Activated CD4-positive, alpha-beta memory T cell treated with anti-CD3 and anti-CD28 coated beads for 36 hours (primary cell): ENCODE measurements at regions of chr11 and their contacts with region 1.

Region 1: GRCh38 chr11:61054927-61055562 is 47.2 kb upstream of the CD5 start:
- DNase-seq: peak; percentile 88
- H3K4me3 Mint-ChIP-seq: peak overlapping the region; percentile 46
- H3K27ac Mint-ChIP-seq: peak overlapping the region; percentile 95
- H3K4me1 Mint-ChIP-seq: peaks cover 89% of the 10 kb centered on the region
- H3K27me3 Mint-ChIP-seq: no peaks in the 10 kb centered on the region

Region 2: GRCh38 chr11:60992842-60993409 is 62.1 kb before region 1 on chr11:
- CTCF ChIA-PET with region 1: interaction called, 3 read pairs
- POLR2A ChIA-PET with region 1: interaction called, 54 read pairs
- intact Hi-C with region 1: no loop called
- DNase-seq: peak; percentile 19
- H3K4me3 Mint-ChIP-seq: peak overlapping the region; percentile 68
- H3K27ac Mint-ChIP-seq: peak overlapping the region; percentile 97
- H3K4me1 Mint-ChIP-seq: peaks cover 81% of the 10 kb centered on the region
- H3K27me3 Mint-ChIP-seq: no peaks in the 10 kb centered on the region

Region 3: DNA sequence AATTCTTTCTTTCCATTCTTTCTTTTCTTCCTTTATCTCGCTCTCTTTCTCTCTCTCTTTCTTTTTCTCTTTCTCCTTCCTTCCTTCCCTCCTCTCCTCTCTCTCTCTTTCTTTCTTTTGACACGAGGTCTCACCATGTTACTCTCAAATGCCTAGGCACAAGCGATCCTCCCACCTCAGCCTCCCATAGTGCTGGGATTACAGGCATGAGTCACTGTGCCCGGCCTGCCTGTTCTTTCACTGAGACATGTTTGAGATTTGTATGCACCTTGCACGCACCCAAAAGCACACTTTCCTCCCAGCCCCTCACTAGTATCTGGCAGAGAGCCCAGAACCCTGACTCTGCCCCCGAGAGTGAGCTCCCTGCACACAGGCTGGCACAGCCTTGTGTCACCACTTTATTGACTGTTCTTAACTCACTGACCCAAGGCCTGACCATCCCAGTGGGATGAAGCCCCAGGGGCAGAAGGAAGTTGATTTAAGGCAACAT is 26.7 kb before region 1 on chr11:
- CTCF ChIA-PET with region 1: no interaction called
- POLR2A ChIA-PET with region 1: interaction called, 27 read pairs
- intact Hi-C with region 1: loop called (anchors 2 kb)
- DNase-seq: peak; percentile 88
- H3K4me3 Mint-ChIP-seq: peak overlapping the region; percentile 83
- H3K27ac Mint-ChIP-seq: peak overlapping the region; percentile 96
- H3K4me1 Mint-ChIP-seq: peaks cover 77% of the 10 kb centered on the region
- H3K27me3 Mint-ChIP-seq: no peaks in the 10 kb centered on the region

Region 4: DNA sequence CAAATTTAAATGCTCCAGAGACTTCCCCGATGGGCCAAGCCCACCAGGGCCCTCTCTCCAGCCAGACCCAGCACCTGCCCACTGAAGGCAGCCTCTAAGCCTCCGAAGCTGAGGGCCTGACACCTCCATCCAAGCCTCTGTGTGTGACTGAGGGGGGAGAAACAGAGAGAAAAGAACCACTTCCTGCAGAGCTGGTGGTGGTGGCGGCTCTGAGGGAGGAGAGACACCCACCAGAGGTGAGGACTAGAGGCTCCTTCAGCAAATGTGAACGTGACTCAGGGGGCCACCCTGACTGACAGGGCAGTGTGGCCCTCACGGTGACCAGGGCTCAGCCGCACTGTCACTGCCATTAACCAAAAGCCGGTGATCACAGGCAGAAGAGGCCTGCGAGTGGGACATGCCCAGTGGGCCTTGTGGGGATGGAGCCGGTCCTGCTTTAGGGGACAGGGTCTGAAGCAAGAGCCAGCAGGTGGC is 16.2 kb after region 1 on chr11:
- CTCF ChIA-PET with region 1: no interaction called
- POLR2A ChIA-PET with region 1: interaction called, 55 read pairs
- intact Hi-C with region 1: no loop called
- DNase-seq: peak; percentile 80
- H3K4me3 Mint-ChIP-seq: peak overlapping the region; percentile 62
- H3K27ac Mint-ChIP-seq: peak overlapping the region; percentile 94
- H3K4me1 Mint-ChIP-seq: peaks cover 89% of the 10 kb centered on the region
- H3K27me3 Mint-ChIP-seq: no peaks in the 10 kb centered on the region

Region 5: GRCh38 chr11:61077936-61078335 is 22.9 kb after region 1 on chr11:
- CTCF ChIA-PET with region 1: interaction called, 3 read pairs
- POLR2A ChIA-PET with region 1: interaction called, 55 read pairs
- intact Hi-C with region 1: loop called (anchors 2 kb)
- DNase-seq: peak; percentile 56
- H3K4me3 Mint-ChIP-seq: peak overlapping the region; percentile 85
- H3K27ac Mint-ChIP-seq: peak overlapping the region; percentile 92
- H3K4me1 Mint-ChIP-seq: peaks cover 83% of the 10 kb centered on the region
- H3K27me3 Mint-ChIP-seq: no peaks in the 10 kb centered on the region